ENCODE measurements at regions of chr11 and their contacts with region 1.

Region 1: DNA sequence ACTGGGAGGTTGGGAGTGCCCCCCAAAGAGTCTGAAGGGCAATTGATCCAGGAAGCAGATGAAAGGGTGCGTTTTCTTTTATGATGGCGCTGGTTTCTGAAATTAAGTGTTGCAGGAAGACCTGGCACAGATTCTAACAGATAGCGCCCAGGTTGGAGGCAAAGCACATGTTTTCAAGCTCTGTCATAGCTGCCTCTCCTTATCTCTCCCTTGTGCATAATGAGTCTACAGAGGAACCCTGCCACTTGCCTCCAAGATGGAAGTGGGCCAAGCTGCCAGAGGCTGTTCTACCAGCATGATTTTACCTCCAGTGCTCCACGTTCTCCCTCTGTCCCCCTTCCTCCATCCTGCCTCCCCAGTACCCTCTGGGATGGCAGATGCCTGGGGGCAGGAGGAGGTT is 30.0 kb upstream of the TLCD5 start:
- ATAC-seq: no peak
- H3K4me3 ChIP-seq: no peak overlapping the region
- H3K27ac ChIP-seq: no peak overlapping the region
- H3K4me1 ChIP-seq: no peaks in the 10 kb centered on the region

Region 2: GRCh38 chr11:119615003-119615881 is 679.8 kb before region 1 on chr11:
- in situ Hi-C with region 1: no loop called
- ATAC-seq: peak in 6 of 8 experiments; percentile 28 to 99 (median 48)
- H3K4me3 ChIP-seq: no peak overlapping the region
- H3K27ac ChIP-seq: no peak overlapping the region
- H3K4me1 ChIP-seq: peaks cover 21 to 29% of the 10 kb centered on the region in 2 donors

Region 3: GRCh38 chr11:120248551-120249278 is 46.4 kb before region 1 on chr11:
- in situ Hi-C with region 1: loop called in 1 of 9 experiments (anchors 10 kb)
- ATAC-seq: peak in 1 of 8 experiments; percentile 19
- H3K4me3 ChIP-seq: no peak overlapping the region
- H3K27ac ChIP-seq: no peak overlapping the region
- H3K4me1 ChIP-seq: no peaks in the 10 kb centered on the region

Region 4: DNA sequence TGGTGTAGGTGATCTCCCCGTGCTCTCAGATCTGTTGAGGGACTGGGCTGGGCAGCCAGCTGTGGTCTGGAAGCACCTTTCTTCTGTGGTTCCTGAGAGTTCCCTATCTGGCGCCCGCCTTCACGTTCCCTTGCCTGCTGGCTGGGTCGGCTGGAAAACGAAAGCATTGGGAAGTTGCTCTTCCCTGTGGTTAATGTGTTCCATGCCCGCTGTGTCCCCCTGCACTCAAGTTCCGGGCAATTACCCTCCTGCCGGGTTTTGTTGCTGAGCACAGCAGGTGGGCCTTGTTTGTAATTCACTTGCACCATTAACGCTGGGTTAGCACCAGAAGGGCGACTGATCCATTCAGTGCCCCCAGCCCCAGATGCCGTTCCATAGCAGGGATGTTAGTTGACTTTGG is 350.6 kb after region 1 on chr11:
- in situ Hi-C with region 1: no loop called
- ATAC-seq: peak in 2 of 8 experiments; percentile 14 to 44
- H3K4me3 ChIP-seq: no peak overlapping the region
- H3K27ac ChIP-seq: no peak overlapping the region
- H3K4me1 ChIP-seq: peaks cover 25 to 32% of the 10 kb centered on the region in 2 donors

Region 5: DNA sequence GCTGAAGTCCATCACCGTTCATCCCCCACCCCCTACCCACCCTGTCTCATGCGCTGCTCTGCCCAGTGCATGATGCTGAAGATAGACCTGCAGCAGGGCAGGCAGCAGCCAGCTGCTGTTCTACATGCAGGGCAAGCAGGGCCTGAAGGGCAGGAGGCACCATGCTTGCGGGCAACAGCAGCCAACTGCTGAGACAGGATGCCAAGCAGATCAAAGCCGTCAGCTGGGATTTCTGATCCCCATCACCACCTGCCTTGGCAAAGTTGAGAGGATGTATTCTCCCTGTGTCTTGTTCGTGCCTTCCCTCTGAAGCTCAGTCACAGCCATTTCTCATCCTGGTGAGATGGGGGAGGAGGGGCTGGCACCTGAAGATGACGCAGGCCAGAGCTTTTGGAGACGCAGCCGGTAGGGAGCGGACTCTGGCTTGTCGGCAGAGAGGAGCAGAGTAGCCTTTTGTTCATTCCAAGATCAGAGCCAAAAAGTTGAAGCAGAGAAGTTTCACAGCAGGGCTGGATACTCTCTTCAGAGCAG is 443.5 kb after region 1 on chr11:
- in situ Hi-C with region 1: no loop called
- ATAC-seq: no peak
- H3K4me3 ChIP-seq: no peak overlapping the region
- H3K27ac ChIP-seq: no peak overlapping the region
- H3K4me1 ChIP-seq: peaks cover 0 to 6% of the 10 kb centered on the region in 2 donors